MCF 10A (cell line): ENCODE measurements at regions of chr1 and their contacts with region 1.

Region 1: GRCh38 chr1:240888039-240888786 is 276.3 kb upstream of the GREM2 start:
- DNase-seq: peak; percentile 88
- H3K4me3 Mint-ChIP-seq: no peak overlapping the region
- H3K27ac Mint-ChIP-seq: no peak overlapping the region
- H3K4me1 Mint-ChIP-seq: peaks cover 5% of the 10 kb centered on the region
- H3K27me3 Mint-ChIP-seq: no peaks in the 10 kb centered on the region
- CTCF ChIP-seq: peak; percentile 100

Region 2: DNA sequence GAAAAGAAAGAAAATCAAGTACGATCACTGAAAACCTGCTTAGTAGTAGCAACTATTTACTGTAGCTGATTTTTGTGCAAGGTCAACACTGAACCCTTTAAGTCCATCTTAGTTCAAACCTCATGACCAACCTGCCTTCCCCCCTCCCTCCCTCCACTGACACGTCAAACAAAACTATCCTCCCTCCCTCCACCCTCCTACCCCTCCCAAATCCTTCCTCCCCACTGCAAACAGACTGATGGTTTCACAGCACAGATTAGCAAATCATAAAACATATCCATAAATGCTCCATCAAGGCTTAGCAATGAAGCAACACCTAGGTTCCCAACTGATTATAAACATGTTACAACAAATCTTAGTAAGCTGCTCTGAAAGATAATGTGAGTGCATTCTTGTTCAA is 112.0 kb before region 1 on chr1:
- CTCF ChIA-PET with region 1: interaction called, 16 read pairs
- POLR2A ChIA-PET with region 1: no interaction called
- intact Hi-C with region 1: no loop called
- DNase-seq: no peak
- H3K4me3 Mint-ChIP-seq: no peak overlapping the region
- H3K27ac Mint-ChIP-seq: no peak overlapping the region
- H3K4me1 Mint-ChIP-seq: peaks cover 15% of the 10 kb centered on the region
- H3K27me3 Mint-ChIP-seq: no peaks in the 10 kb centered on the region
- CTCF ChIP-seq: no peak

Region 3: DNA sequence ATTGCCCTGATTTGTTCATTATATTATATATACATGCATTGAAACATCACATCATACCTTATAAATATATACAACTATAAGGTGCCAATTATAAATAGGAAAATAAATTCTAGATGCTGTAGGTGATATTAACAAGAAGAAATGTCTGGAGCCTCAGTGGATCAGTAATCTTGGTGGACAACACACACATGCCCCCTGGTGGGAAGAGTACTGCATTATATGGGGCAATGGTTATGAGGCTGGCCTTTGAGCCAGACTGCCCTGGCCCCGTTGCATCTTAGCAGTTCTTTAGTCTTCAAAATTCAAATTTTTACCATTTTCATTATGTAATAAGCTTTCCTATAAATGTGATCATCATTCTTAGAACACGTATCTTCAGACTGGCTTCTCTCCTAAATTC is 58.7 kb after region 1 on chr1:
- CTCF ChIA-PET with region 1: interaction called, 50 read pairs
- POLR2A ChIA-PET with region 1: interaction called, 3 read pairs
- intact Hi-C with region 1: loop called (anchors 1 kb)
- DNase-seq: peak; percentile 85
- H3K4me3 Mint-ChIP-seq: no peak overlapping the region
- H3K27ac Mint-ChIP-seq: no peak overlapping the region
- H3K4me1 Mint-ChIP-seq: no peaks in the 10 kb centered on the region
- H3K27me3 Mint-ChIP-seq: no peaks in the 10 kb centered on the region
- CTCF ChIP-seq: peak; percentile 81

Region 4: GRCh38 chr1:241020851-241021697 is 132.9 kb after region 1 on chr1:
- CTCF ChIA-PET with region 1: no interaction called
- POLR2A ChIA-PET with region 1: no interaction called
- intact Hi-C with region 1: no loop called
- DNase-seq: no peak
- H3K4me3 Mint-ChIP-seq: no peak overlapping the region
- H3K27ac Mint-ChIP-seq: no peak overlapping the region
- H3K4me1 Mint-ChIP-seq: no peaks in the 10 kb centered on the region
- H3K27me3 Mint-ChIP-seq: no peaks in the 10 kb centered on the region
- CTCF ChIP-seq: no peak

Region 5: GRCh38 chr1:241269116-241269515 is 380.9 kb after region 1 on chr1:
- CTCF ChIA-PET with region 1: no interaction called
- POLR2A ChIA-PET with region 1: no interaction called
- intact Hi-C with region 1: loop called (anchors 1 kb)
- DNase-seq: peak; percentile 56
- H3K4me3 Mint-ChIP-seq: no peak overlapping the region
- H3K27ac Mint-ChIP-seq: no peak overlapping the region
- H3K4me1 Mint-ChIP-seq: no peaks in the 10 kb centered on the region
- H3K27me3 Mint-ChIP-seq: no peaks in the 10 kb centered on the region
- CTCF ChIP-seq: peak; percentile 38

Region 6: DNA sequence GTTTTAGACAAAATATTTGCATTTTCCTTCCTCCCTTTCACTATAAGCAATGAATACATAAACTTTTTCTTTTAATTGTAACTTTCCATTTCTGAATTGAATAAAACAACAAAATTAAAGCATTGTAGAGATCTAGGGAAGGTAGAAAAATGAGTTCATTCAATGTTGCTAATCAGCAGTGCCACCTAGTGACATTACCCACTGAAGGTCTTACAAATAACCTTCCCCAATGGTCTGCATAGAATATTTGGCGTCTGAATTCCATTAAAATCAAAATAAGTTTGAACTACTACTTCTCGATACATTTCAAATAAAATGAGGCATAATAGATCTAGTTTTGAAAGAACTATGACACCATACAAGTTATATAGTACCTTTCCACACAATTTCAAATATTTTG is 611.7 kb after region 1 on chr1:
- CTCF ChIA-PET with region 1: interaction called, 27 read pairs
- POLR2A ChIA-PET with region 1: no interaction called
- intact Hi-C with region 1: loop called (anchors 1 kb)
- DNase-seq: peak; percentile 65
- H3K4me3 Mint-ChIP-seq: no peak overlapping the region
- H3K27ac Mint-ChIP-seq: no peak overlapping the region
- H3K4me1 Mint-ChIP-seq: no peaks in the 10 kb centered on the region
- H3K27me3 Mint-ChIP-seq: no peaks in the 10 kb centered on the region
- CTCF ChIP-seq: peak; percentile 84

Region 7: DNA sequence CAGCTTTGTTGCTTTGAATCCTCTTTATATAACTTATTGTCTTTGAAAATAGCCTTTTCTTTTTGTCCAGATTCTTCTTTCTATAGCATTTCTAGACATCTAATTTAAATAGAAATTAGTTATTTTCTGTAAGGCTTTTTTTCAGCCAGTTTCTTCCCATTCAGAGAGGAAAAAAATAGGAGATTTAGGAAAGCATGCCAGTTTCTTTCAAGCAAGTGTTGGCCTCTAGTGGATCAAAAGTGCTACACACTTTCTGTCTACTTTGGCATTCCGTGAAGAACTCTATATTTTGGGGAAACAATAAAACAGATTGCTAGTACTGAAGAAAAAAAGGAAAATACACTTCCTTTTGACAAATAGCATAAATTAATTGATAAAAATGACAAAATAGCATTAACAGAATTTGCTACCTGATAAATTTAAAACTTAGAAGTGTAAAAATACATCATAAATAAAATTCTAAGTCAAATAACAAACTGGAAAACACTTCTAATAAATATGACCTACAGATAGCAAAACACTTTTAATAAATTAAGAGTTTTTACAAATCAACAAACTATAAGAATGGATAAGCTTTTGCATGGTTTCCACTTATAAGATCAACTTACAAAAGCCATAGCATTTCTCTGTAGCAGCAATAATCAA is 946.6 kb after region 1 on chr1:
- CTCF ChIA-PET with region 1: interaction called, 3 read pairs
- POLR2A ChIA-PET with region 1: no interaction called
- intact Hi-C with region 1: loop called (anchors 10 kb)
- DNase-seq: peak; percentile 75
- H3K4me3 Mint-ChIP-seq: no peak overlapping the region
- H3K27ac Mint-ChIP-seq: peak overlapping the region; percentile 36
- H3K4me1 Mint-ChIP-seq: peaks cover 22% of the 10 kb centered on the region
- H3K27me3 Mint-ChIP-seq: no peaks in the 10 kb centered on the region
- CTCF ChIP-seq: peak; percentile 98